Prostate gland (tissue), 2 donors: ENCODE measurements at regions of chr5 and their contacts with region 1.

Region 1: GRCh38 chr5:134577796-134578363 is 52.4 kb downstream of the JADE2 start:
- DNase-seq: peak; percentile 78
- H3K4me3 ChIP-seq: no peak overlapping the region
- H3K27ac ChIP-seq: no peak overlapping the region
- H3K4me1 ChIP-seq: no peaks in the 10 kb centered on the region
- H3K27me3 ChIP-seq: no peaks in the 10 kb centered on the region
- CTCF ChIP-seq: peak; percentile 61 to 86 (median 82)
- POLR2A ChIP-seq: no peak

Region 2: DNA sequence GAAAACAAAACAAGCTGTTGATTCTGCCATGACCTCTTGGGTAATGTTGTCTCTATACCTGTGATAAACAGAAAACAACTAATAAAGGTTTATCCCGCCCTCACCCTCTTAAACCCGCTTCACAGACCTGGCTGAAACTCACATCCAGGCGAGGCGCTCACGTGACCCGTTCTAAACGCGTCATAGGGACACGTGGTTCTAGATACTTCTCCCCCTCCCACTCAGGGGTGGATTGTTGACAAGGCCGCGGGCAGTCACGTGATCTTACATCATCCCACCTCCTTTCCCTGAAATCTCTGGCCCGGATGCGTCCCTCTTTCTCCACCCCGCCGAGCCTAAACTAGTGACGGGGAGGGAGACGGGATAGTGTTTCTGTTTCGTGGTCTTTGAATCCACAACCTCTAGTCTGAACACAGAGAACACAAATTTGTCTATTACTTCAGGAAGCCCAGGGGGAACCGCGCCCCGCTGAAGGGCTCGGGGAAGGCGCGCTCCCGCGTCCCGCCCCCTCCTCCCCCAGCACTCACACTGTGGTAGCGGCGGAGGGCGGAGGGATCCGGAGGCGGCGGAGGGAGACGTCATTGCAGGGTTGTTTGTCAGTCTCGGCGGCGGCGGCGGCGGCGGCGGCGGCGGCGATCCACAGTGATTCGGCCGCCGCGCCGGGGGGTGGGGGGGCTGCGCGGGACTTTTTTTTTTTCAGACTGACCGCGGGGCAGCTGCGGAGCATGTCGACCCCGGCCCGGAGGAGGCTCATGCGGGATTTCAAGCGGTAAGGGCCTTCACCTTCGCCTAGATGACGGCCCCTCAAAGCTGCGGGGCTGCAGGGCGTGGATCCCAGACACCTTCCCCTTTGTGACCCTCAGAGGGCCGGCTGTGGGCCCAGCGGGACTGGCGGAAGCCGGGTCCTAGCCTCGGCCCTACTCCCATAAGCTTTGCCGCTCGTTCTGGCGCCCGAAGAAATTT is 206.7 kb before region 1 on chr5 and contains the start of gene UBE2B:
- intact Hi-C with region 1: loop called (anchors 5 kb)
- DNase-seq: peak; percentile 99
- H3K4me3 ChIP-seq: peak within 1 kb of the TSS; percentile 75 to 76
- H3K27ac ChIP-seq: peak within 1 kb of the TSS; percentile 96 to 97
- H3K4me1 ChIP-seq: no peaks in the 10 kb centered on the region
- H3K27me3 ChIP-seq: no peaks in the 10 kb centered on the region
- CTCF ChIP-seq: peak in 2 of 4 experiments; percentile 18 to 23
- POLR2A ChIP-seq: peak; percentile 86
- total RNA-seq, gene UBE2B: 27.4 to 57.7 TPM

Region 3: GRCh38 chr5:134503088-134503946 is 74.6 kb before region 1 on chr5:
- intact Hi-C with region 1: no loop called
- DNase-seq: no peak
- H3K4me3 ChIP-seq: no peak overlapping the region
- H3K27ac ChIP-seq: peak overlapping the region; percentile 31 to 42
- H3K4me1 ChIP-seq: no peaks in the 10 kb centered on the region
- H3K27me3 ChIP-seq: no peaks in the 10 kb centered on the region
- CTCF ChIP-seq: no peak
- POLR2A ChIP-seq: peak; percentile 32